Ascending aorta (tissue), 2 donors: ENCODE measurements at regions of chr13 and their contacts with region 1.

Region 1: DNA sequence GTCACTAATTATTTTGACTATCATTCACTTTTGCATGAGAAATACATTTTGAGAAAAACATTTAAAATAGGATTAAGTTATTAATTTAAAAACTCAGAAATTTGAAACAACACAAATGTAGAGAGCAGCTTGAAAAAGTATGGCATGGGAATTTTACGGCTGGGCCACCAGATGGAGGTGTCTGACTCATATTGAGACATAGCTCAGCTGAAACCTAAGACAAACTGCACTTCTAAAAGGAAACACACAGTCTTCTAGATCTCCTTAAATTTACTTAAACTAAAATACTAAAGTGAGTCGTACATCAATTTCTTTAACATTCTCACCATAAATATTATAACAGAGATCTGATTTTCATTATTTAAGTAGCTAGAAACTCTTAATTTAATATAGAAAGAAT is 41.9 kb upstream of the POSTN start:
- DNase-seq: no peak
- H3K4me3 ChIP-seq: no peak overlapping the region
- H3K27ac ChIP-seq: no peak overlapping the region
- H3K4me1 ChIP-seq: no peaks in the 10 kb centered on the region
- H3K27me3 ChIP-seq: no peaks in the 10 kb centered on the region
- CTCF ChIP-seq: peak in 2 of 3 experiments; percentile 46 to 47

Region 2: GRCh38 chr13:37888916-37889501 is 248.5 kb after region 1 on chr13:
- intact Hi-C with region 1: loop called (anchors 10 kb)
- DNase-seq: no peak
- H3K4me3 ChIP-seq: peak overlapping the region in 1 of 2 donors; percentile 10
- H3K27ac ChIP-seq: no peak overlapping the region
- H3K4me1 ChIP-seq: peaks cover 0 to 3% of the 10 kb centered on the region in 2 donors
- H3K27me3 ChIP-seq: no peaks in the 10 kb centered on the region
- CTCF ChIP-seq: no peak